ENCODE measurements at regions of chr14 and their contacts with region 1.

Region 1: DNA sequence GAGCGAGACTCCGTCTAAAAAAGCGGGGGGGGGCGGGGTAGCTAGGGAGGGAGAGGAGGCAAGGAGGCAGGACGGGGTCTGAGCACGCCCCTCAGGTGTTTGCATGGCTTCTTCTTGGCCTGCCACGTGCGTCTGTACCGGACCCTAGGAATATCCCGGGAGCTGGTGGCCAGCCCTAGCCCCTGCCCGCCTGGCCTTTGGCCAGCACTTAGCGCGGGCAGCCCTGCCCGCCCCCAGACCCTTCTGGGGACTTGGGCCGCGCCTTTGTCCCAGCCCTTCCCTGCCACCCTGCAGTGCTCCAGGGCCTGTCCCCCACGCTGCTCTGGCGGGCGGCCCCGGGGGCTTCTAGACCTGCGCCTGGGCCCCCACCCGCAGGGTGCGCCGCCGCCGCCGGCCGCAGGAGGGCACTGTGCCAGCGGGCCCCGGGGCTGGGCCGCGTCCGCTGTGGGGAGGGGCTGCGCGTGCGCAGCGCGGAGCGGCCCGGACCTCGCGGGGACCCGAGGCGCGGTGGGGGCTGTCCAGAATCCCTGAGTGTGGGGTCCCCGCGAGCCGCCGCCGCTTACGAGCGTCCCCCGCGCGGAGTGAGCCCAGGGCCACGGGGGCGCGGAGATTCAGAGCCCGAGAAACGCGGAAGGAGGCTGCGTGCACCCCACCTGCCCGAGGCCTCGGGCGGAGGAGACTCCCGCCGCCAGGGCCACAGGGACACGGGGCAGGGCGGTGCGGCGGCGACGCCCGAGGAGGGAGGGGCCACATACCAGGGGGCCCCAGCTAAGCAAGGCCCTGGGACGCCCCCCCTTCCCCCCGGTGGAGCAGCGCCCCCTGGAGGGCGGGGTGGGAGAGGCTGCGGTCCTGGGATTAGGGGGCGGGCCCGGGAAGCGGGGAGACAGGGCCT is 21.0 kb downstream of the SLC25A29 start:
- DNase-seq: no peak
- H3K4me3 ChIP-seq: peak overlapping the region; percentile 70
- CTCF ChIP-seq: peak; percentile 95

Region 2: DNA sequence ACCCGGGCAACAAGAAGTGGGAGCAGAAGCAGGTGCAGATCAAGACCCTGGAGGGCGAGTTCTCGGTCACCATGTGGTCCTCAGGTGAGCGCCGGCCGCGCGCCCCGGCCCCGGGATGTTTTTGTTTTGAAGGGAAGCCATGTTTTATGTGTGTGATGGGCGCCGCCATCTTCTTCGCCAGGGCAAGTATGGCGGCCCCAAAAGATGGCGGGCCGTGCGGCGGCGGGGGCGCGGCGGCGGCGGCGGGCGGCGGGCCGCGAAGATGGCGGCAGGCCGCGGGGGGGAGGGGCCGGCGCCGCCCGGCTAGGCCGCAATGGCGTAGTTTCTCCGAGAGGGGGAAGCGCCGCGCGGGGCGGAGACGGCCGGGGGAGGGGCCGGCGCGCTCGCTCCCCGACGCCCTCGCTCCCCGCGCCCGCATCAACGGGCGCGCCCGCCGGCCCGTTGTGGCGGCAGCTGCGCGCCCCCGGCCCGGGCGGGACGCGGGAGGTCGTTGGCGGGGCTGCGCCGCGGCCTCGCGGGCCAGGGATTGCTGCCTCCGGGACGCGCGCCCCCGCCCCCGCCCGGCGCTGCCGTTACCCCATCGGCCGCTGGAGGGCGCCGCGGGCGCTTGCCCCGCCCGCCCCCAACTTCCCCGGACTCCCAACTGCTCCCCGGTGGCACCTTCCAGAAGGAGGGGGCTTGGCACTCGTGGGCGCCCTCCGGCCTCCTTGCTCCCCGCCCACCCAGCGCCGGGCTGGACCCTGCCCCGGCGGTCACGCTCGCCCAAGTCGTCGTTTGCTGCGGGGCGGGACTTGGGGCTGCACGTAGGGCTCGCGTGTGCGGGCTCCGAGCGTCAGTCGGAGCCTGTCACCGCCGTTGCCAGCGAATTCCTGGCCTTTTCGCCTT is 45.2 kb before region 1 on chr14:
- CTCF ChIA-PET with region 1: interaction called, 26 read pairs
- POLR2A ChIA-PET with region 1: no interaction called
- DNase-seq: peak; percentile 64
- H3K4me3 ChIP-seq: peak overlapping the region; percentile 97
- CTCF ChIP-seq: peak; percentile 54

Region 3: GRCh38 chr14:100263144-100263543 is 22.1 kb before region 1 on chr14:
- CTCF ChIA-PET with region 1: interaction called, 37 read pairs
- POLR2A ChIA-PET with region 1: no interaction called
- DNase-seq: no peak
- H3K4me3 ChIP-seq: no peak overlapping the region
- CTCF ChIP-seq: no peak

Region 4: GRCh38 chr14:100271247-100271939 is 13.9 kb before region 1 on chr14:
- CTCF ChIA-PET with region 1: interaction called, 45 read pairs
- POLR2A ChIA-PET with region 1: no interaction called
- DNase-seq: no peak
- H3K4me3 ChIP-seq: no peak overlapping the region
- CTCF ChIP-seq: no peak

Region 5: GRCh38 chr14:100297302-100298300 is 12.3 kb after region 1 on chr14:
- CTCF ChIA-PET with region 1: interaction called, 141 read pairs
- POLR2A ChIA-PET with region 1: no interaction called
- DNase-seq: no peak
- H3K4me3 ChIP-seq: no peak overlapping the region
- CTCF ChIP-seq: no peak